Endothelial cell of umbilical vein (primary cell): ENCODE measurements at regions of chr15 and their contacts with region 1.

Region 1: DNA sequence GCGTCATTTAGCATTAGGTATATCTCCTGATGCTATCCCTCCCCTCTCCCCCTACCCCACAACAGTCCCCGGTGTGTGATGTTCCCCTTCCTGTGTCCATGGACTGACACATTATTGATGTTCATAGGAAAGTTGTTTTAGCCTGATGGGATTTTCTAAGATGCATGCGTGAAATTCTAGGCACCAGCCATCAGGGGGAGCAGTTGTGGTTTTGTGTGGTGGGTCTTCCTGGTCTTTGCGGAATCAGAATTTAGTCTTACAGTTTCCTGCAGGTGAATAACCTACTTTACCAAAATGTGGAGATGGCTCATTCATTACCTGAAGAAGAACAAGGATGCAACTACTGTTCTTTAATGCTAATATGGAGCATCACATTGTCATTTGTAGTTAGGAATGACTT is 455.0 kb upstream of the THBS1 start:
- DNase-seq: peak; percentile 75
- H3K4me3 ChIP-seq: no peak overlapping the region
- H3K27ac ChIP-seq: peak overlapping the region; percentile 90
- H3K4me1 ChIP-seq: peaks cover 63% of the 10 kb centered on the region
- H3K27me3 ChIP-seq: no peaks in the 10 kb centered on the region
- CTCF ChIP-seq: peak; percentile 68 to 74
- POLR2A ChIP-seq: no peak

Region 2: DNA sequence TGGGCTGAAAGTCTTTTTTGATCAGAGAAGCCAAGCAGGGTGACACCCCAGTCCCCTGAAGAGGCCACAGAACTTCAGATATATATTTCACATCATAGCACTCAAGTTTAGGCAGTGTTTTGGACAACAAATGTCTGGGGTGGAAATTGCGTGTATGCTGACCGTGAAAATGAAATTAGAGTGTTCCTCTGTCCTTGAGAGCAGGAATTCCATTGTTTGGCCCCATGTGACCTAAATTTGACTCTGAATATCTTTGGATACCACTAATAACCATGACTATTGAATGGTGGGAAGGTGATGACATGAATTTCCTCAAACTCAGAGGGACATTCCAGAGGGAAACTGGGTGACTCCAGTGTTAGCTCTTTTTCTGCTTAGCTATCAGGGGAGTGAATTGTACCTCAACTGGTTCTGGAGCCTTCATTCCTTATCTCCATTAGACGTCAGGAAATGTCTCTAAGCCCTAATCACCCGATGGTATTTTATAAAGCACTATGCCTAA is 297.8 kb before region 1 on chr15:
- CTCF ChIA-PET with region 1: interaction called, 5 read pairs
- POLR2A ChIA-PET with region 1: interaction called, 11 read pairs
- dilution Hi-C with region 1: loop called (anchors 25 kb)
- intact Hi-C with region 1: loop called (anchors 1 kb)
- DNase-seq: peak; percentile 100
- H3K4me3 ChIP-seq: no peak overlapping the region
- H3K27ac ChIP-seq: peak overlapping the region; percentile 100
- H3K4me1 ChIP-seq: peaks cover 59% of the 10 kb centered on the region
- H3K27me3 ChIP-seq: no peaks in the 10 kb centered on the region
- CTCF ChIP-seq: no peak
- POLR2A ChIP-seq: peak; percentile 65

Region 3: DNA sequence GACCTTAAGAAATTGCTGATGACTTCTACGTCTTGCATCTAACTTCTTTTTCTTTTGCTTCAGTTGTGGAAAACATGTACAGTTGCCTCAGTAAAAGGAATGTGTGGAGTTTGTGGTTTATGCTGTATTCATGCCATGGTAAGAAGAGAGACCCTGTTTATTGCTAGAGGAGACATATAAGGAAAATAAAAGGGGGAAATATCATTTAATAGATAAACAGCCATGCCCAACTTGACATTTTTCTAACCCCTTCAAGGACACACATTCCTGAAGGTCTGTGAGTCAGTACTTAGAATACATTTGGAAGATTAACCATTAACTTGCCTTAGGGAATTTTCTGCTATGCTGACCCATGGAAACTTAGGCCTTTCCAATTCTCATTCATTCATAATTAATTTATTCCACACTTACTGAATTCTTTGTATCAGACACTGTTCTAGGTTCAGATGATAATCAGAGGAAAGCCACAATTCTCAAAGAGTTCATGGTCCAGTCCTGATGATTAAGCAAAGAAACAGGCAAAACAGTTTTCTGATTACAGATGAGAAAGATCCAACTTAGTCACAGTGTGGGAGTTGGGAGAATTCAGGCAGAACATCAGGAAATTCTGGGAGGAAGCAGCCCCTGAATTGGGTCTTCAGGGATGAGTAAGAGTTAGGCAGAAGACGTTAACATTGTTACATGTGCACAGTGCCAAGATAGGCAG is 231.5 kb before region 1 on chr15:
- CTCF ChIA-PET with region 1: interaction called, 3 read pairs
- POLR2A ChIA-PET with region 1: no interaction called
- dilution Hi-C with region 1: loop called (anchors 10 kb)
- intact Hi-C with region 1: loop called (anchors 2 kb)
- DNase-seq: peak; percentile 91
- H3K4me3 ChIP-seq: no peak overlapping the region
- H3K27ac ChIP-seq: peak overlapping the region; percentile 92
- H3K4me1 ChIP-seq: peaks cover 49% of the 10 kb centered on the region
- H3K27me3 ChIP-seq: no peaks in the 10 kb centered on the region
- CTCF ChIP-seq: no peak
- POLR2A ChIP-seq: no peak

Region 4: GRCh38 chr15:38996111-38996631 is 129.7 kb before region 1 on chr15:
- CTCF ChIA-PET with region 1: interaction called, 18 read pairs
- POLR2A ChIA-PET with region 1: interaction called, 12 read pairs
- dilution Hi-C with region 1: no loop called
- intact Hi-C with region 1: loop called (anchors 1 kb)
- DNase-seq: peak; percentile 96
- H3K4me3 ChIP-seq: no peak overlapping the region
- H3K27ac ChIP-seq: peak overlapping the region; percentile 92
- H3K4me1 ChIP-seq: peaks cover 51% of the 10 kb centered on the region
- H3K27me3 ChIP-seq: no peaks in the 10 kb centered on the region
- CTCF ChIP-seq: no peak
- POLR2A ChIP-seq: peak; percentile 35

Region 5: DNA sequence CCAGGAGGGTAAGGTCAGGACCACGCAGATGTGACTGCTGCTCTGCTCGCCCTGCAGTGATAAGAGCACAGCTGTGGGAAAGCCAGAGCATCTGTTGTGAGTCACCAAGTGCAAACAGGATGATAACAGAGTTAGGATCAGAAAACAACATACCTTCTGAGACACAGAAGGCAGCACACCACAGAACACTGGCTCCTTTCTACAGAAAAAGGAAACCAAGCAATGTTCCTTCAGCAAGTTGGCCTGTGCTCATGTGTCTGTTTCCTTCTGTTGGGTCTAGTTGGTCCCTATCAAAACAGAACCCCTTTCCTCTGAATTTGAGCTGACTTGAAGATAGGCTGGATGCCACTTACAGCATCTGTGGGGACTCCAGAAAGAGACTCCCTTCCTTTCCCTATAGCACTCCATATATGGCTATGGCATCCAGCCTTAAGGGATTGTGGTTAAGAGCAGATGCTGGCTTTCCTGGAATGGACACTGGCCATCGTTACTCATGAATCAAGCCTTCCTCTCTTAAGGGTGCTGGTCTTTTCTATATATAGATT is 14.2 kb after region 1 on chr15:
- CTCF ChIA-PET with region 1: interaction called, 5 read pairs
- POLR2A ChIA-PET with region 1: interaction called, 17 read pairs
- dilution Hi-C with region 1: no loop called
- intact Hi-C with region 1: loop called (anchors 1 kb)
- DNase-seq: peak; percentile 100
- H3K4me3 ChIP-seq: no peak overlapping the region
- H3K27ac ChIP-seq: peak overlapping the region; percentile 96
- H3K4me1 ChIP-seq: peaks cover 34% of the 10 kb centered on the region
- H3K27me3 ChIP-seq: no peaks in the 10 kb centered on the region
- CTCF ChIP-seq: no peak
- POLR2A ChIP-seq: peak; percentile 90

Region 6: GRCh38 chr15:39180483-39180933 is 54.6 kb after region 1 on chr15:
- CTCF ChIA-PET with region 1: no interaction called
- POLR2A ChIA-PET with region 1: no interaction called
- dilution Hi-C with region 1: no loop called
- intact Hi-C with region 1: no loop called
- DNase-seq: no peak
- H3K4me3 ChIP-seq: no peak overlapping the region
- H3K27ac ChIP-seq: no peak overlapping the region
- H3K4me1 ChIP-seq: peaks cover 15% of the 10 kb centered on the region
- H3K27me3 ChIP-seq: no peaks in the 10 kb centered on the region
- CTCF ChIP-seq: no peak
- POLR2A ChIP-seq: no peak

Region 7: GRCh38 chr15:39248204-39248603 is 122.3 kb after region 1 on chr15:
- CTCF ChIA-PET with region 1: no interaction called
- POLR2A ChIA-PET with region 1: interaction called, 3 read pairs
- dilution Hi-C with region 1: no loop called
- intact Hi-C with region 1: loop called (anchors 1 kb)
- DNase-seq: peak; percentile 99
- H3K4me3 ChIP-seq: peak overlapping the region in 1 of 3 experiments; percentile 0
- H3K27ac ChIP-seq: peak overlapping the region; percentile 98
- H3K4me1 ChIP-seq: peaks cover 72% of the 10 kb centered on the region
- H3K27me3 ChIP-seq: no peaks in the 10 kb centered on the region
- CTCF ChIP-seq: no peak
- POLR2A ChIP-seq: no peak

Region 8: GRCh38 chr15:39429898-39430357 is 304.0 kb after region 1 on chr15:
- CTCF ChIA-PET with region 1: no interaction called
- POLR2A ChIA-PET with region 1: interaction called, 3 read pairs
- dilution Hi-C with region 1: no loop called
- intact Hi-C with region 1: loop called (anchors 1 kb)
- DNase-seq: peak; percentile 99
- H3K4me3 ChIP-seq: no peak overlapping the region
- H3K27ac ChIP-seq: peak overlapping the region; percentile 98
- H3K4me1 ChIP-seq: peaks cover 52% of the 10 kb centered on the region
- H3K27me3 ChIP-seq: no peaks in the 10 kb centered on the region
- CTCF ChIP-seq: no peak
- POLR2A ChIP-seq: peak; percentile 75